ENCODE measurements at regions of chr6 and their contacts with region 1.

Region 1: DNA sequence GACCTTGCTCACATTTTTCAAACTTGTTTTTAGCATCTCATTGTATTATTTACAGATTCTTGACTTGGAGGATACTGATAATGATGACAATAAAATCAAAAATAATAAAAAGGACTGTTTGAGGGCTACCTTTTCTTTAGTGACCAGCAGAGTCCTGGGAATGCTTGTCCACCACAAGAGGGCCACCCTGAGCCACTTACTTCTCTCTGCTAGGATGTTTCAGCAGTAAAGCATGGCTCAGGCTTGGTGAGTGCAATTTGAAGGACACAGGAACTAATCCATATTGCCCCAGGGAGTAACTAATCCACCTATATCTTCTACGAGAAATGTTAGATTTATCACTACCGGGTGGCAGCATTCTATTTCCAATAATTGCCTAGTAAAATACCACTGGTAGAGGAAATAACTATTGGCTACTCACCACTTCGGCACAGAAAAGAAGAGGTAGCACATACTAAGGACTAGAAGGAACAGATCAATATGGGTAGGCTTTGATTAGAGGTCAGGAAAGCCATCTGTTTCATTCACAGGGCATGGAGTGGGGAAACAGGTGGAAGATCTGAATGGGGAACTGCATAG is 5.8 kb upstream of the KIAA0408 start:
- DNase-seq: peak; percentile 81
- ATAC-seq: peak; percentile 92
- H3K4me3 Mint-ChIP-seq: no peak overlapping the region
- H3K27ac Mint-ChIP-seq: no peak overlapping the region
- H3K4me1 Mint-ChIP-seq: no peaks in the 10 kb centered on the region
- H3K27me3 Mint-ChIP-seq: no peaks in the 10 kb centered on the region
- CTCF ChIP-seq: peak; percentile 89

Region 2: GRCh38 chr6:127376685-127377084 is 88.3 kb before region 1 on chr6:
- CTCF ChIA-PET with region 1: no interaction called
- POLR2A ChIA-PET with region 1: no interaction called
- intact Hi-C with region 1: no loop called
- DNase-seq: no peak
- ATAC-seq: no peak
- H3K4me3 Mint-ChIP-seq: no peak overlapping the region
- H3K27ac Mint-ChIP-seq: no peak overlapping the region
- H3K4me1 Mint-ChIP-seq: no peaks in the 10 kb centered on the region
- H3K27me3 Mint-ChIP-seq: peaks cover 2% of the 10 kb centered on the region
- CTCF ChIP-seq: no peak

Region 3: DNA sequence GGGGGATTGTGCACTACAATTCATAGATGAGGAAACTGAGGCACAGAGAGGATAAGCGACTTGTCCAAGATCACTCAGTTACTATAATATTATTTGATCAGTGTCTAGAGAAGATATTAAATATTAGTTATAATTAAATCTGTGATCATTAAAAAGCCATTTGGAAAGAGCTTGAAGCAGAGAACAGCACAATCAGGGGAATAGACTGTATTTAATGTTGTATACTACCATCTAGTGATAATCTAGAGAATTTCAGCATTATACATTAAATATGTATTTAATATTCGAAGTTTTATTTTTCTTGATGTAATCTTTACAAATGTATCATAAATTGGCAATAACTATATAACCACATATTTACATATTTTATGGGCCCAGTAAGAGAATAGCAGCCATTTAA is 74.3 kb after region 1 on chr6:
- CTCF ChIA-PET with region 1: interaction called, 43 read pairs
- POLR2A ChIA-PET with region 1: no interaction called
- intact Hi-C with region 1: loop called (anchors 1 kb)
- DNase-seq: no peak
- ATAC-seq: peak; percentile 76
- H3K4me3 Mint-ChIP-seq: no peak overlapping the region
- H3K27ac Mint-ChIP-seq: no peak overlapping the region
- H3K4me1 Mint-ChIP-seq: no peaks in the 10 kb centered on the region
- H3K27me3 Mint-ChIP-seq: peaks cover 12% of the 10 kb centered on the region
- CTCF ChIP-seq: peak; percentile 61

Region 4: GRCh38 chr6:127547215-127547614 is 82.2 kb after region 1 on chr6:
- CTCF ChIA-PET with region 1: interaction called, 15 read pairs
- POLR2A ChIA-PET with region 1: no interaction called
- intact Hi-C with region 1: no loop called
- DNase-seq: peak; percentile 37
- ATAC-seq: peak; percentile 51
- H3K4me3 Mint-ChIP-seq: no peak overlapping the region
- H3K27ac Mint-ChIP-seq: no peak overlapping the region
- H3K4me1 Mint-ChIP-seq: no peaks in the 10 kb centered on the region
- H3K27me3 Mint-ChIP-seq: peaks cover 16% of the 10 kb centered on the region
- CTCF ChIP-seq: no peak

Region 5: GRCh38 chr6:127690092-127690491 is 225.1 kb after region 1 on chr6:
- CTCF ChIA-PET with region 1: no interaction called
- POLR2A ChIA-PET with region 1: no interaction called
- intact Hi-C with region 1: no loop called
- DNase-seq: no peak
- ATAC-seq: no peak
- H3K4me3 Mint-ChIP-seq: no peak overlapping the region
- H3K27ac Mint-ChIP-seq: no peak overlapping the region
- H3K4me1 Mint-ChIP-seq: no peaks in the 10 kb centered on the region
- H3K27me3 Mint-ChIP-seq: no peaks in the 10 kb centered on the region
- CTCF ChIP-seq: no peak

Measured in activated CD8-positive, alpha-beta T cell treated with anti-CD3 and anti-CD28 coated beads for 36 hours (primary cell).